ENCODE measurements at regions of chr20 and their contacts with region 1.

Region 1: GRCh38 chr20:51931371-51931781 is 129.1 kb upstream of the SALL4 start:
- DNase-seq: no peak
- ATAC-seq: no peak
- H3K4me3 ChIP-seq: no peak overlapping the region
- H3K27ac ChIP-seq: peak overlapping the region; percentile 62; the same call in 1 of the 2 replicates
- H3K4me1 ChIP-seq: peaks cover 19% of the 10 kb centered on the region
- H3K27me3 ChIP-seq: no peaks in the 10 kb centered on the region
- CTCF ChIP-seq: no peak

Region 2: DNA sequence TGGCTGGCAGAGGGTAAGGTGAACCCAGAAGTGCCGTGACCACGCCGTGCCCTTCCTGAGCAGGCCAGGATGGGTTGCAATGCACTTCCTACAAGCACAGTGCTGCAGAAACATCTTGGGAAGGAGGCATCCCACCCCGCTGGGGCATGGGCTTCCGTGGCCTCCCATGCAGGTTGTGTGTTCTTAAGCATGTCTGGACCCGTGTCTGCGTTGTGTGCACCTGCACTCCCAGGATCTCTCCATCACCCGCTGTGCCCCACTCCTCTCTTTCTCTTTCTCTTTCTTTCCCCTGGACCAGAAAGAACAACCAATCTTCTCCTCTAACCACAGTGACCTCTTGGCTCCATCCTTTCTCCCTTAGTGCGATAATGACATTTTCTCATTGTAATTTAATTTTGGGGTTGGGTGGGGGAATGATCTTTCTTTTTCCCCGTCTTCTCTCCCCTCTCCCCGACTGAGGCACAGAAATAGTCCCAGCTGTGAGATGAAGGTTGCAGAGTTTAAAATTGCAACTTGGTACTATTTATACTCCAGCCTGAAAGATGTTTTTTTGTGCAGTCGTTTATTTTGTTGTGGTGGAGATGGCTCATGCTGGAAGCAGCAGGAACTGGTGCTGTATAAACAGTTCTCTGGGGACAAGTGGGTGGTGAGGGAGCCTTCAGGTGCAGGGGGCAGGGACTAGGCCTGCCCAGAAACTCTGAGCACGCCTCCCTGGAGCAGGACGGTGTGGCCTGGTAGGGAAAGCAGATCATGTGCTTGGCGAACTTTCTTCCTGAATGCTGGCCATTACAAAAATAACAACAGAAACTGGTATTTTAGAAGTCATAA is 1116.0 kb before region 1 on chr20:
- CTCF ChIA-PET with region 1: no interaction called
- POLR2A ChIA-PET with region 1: no interaction called
- in situ Hi-C with region 1: no loop called
- intact Hi-C with region 1: no loop called
- DNase-seq: no peak
- ATAC-seq: peak; percentile 68
- H3K4me3 ChIP-seq: no peak overlapping the region
- H3K27ac ChIP-seq: no peak overlapping the region
- H3K4me1 ChIP-seq: no peaks in the 10 kb centered on the region
- H3K27me3 ChIP-seq: no peaks in the 10 kb centered on the region
- CTCF ChIP-seq: no peak

Region 3: GRCh38 chr20:51945177-51945576 is 13.8 kb after region 1 on chr20:
- CTCF ChIA-PET with region 1: no interaction called
- POLR2A ChIA-PET with region 1: interaction called, 10 read pairs
- in situ Hi-C with region 1: no loop called
- intact Hi-C with region 1: no loop called
- DNase-seq: no peak
- ATAC-seq: no peak
- H3K4me3 ChIP-seq: no peak overlapping the region
- H3K27ac ChIP-seq: no peak overlapping the region
- H3K4me1 ChIP-seq: no peaks in the 10 kb centered on the region
- H3K27me3 ChIP-seq: no peaks in the 10 kb centered on the region
- CTCF ChIP-seq: no peak

Region 4: GRCh38 chr20:51988529-51988928 is 57.2 kb after region 1 on chr20:
- CTCF ChIA-PET with region 1: no interaction called
- POLR2A ChIA-PET with region 1: interaction called, 13 read pairs
- in situ Hi-C with region 1: no loop called
- intact Hi-C with region 1: no loop called
- DNase-seq: no peak
- ATAC-seq: no peak
- H3K4me3 ChIP-seq: no peak overlapping the region
- H3K27ac ChIP-seq: no peak overlapping the region
- H3K4me1 ChIP-seq: no peaks in the 10 kb centered on the region
- H3K27me3 ChIP-seq: no peaks in the 10 kb centered on the region
- CTCF ChIP-seq: no peak